Caco-2 (cell line): ENCODE measurements at regions of chr3 and their contacts with region 1.

Region 1: DNA sequence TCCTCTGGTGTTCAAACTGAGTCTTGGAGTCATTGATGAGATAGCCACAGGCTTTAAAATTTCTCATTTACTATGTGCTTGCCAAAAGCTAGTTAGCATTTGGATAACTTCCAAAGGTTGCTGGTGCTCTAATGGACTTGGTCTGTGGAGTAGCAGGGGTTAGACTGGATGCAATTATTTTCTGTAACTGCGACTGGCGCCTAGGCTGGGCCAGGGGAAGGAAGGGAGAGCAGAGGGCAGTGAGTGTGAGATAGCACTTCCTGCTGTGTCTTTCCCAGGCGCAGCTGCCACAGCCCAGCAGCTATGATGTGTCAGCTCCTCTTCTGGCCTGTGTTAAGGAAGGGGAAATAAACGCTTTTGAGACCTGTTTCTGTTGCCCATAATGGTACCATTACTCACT is 98.6 kb downstream of the MYRIP start:
- DNase-seq: no peak
- H3K4me3 ChIP-seq: no peak overlapping the region
- H3K4me3 Mint-ChIP-seq: no peak overlapping the region
- H3K27ac Mint-ChIP-seq: no peak overlapping the region
- H3K4me1 ChIP-seq: peaks cover 21% of the 10 kb centered on the region
- H3K4me1 Mint-ChIP-seq: peaks cover 18% of the 10 kb centered on the region
- H3K27me3 ChIP-seq: no peaks in the 10 kb centered on the region
- H3K27me3 Mint-ChIP-seq: no peaks in the 10 kb centered on the region
- CTCF ChIP-seq: no peak

Region 2: DNA sequence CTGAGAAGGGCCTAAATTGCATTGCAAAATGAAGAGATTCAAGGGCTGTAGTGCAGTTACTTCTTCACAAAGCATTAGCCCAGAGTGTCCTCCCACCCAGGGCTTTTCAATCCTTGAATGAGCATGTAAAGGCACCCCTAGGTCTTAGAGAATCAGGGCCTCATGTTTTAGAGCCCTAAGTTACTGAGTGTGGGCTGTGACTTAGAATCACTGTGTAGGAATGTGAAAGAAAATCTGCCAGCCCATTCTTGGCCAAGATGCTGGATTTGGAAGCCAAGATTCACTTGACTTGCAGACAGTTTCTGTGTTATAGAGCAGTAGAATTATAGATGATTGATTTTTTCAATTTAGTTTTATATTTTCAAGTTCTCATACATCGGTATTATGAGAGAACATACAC is 54.6 kb after region 1 on chr3:
- CTCF ChIA-PET with region 1: no interaction called
- POLR2A ChIA-PET with region 1: no interaction called
- intact Hi-C with region 1: loop called (anchors 10 kb)
- DNase-seq: no peak
- H3K4me3 ChIP-seq: no peak overlapping the region
- H3K4me3 Mint-ChIP-seq: no peak overlapping the region
- H3K27ac Mint-ChIP-seq: no peak overlapping the region
- H3K4me1 ChIP-seq: no peaks in the 10 kb centered on the region
- H3K4me1 Mint-ChIP-seq: no peaks in the 10 kb centered on the region
- H3K27me3 ChIP-seq: no peaks in the 10 kb centered on the region
- H3K27me3 Mint-ChIP-seq: no peaks in the 10 kb centered on the region
- CTCF ChIP-seq: no peak